B cell (primary cell): ENCODE measurements at regions of chr6 and their contacts with region 1.

Region 1: DNA sequence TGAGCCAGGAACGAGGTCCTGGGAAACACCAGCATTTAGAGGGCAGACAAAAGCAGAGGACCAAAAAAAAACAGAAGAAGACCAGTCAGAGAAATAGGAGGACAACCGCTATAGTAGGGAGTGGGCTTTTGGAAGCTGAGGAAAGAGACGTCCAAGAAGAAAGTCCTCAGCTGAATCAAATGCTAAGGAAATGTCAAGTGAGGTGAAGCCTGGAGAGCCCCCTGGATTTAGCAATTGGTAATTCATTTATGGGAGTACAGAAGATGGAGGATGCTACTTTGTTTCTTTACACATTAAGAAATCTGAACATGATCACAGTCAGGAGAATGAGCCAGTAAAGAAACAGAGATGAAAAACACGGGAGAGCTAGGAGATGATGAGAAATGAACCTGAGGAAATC is 41.1 kb downstream of the LRP11 start:
- DNase-seq: no peak
- ATAC-seq: no peak
- H3K4me3 ChIP-seq: no peak overlapping the region
- H3K4me3 Mint-ChIP-seq: no peak overlapping the region
- H3K27ac ChIP-seq: no peak overlapping the region
- H3K27ac Mint-ChIP-seq: no peak overlapping the region
- H3K4me1 ChIP-seq: no peaks in the 10 kb centered on the region
- H3K4me1 Mint-ChIP-seq: no peaks in the 10 kb centered on the region
- H3K27me3 ChIP-seq: no peaks in the 10 kb centered on the region
- H3K27me3 Mint-ChIP-seq: peaks cover 22% of the 10 kb centered on the region
- CTCF ChIP-seq: no peak

Region 2: GRCh38 chr6:149763866-149764265 is 59.1 kb before region 1 on chr6:
- CTCF ChIA-PET with region 1: no interaction called
- POLR2A ChIA-PET with region 1: no interaction called
- intact Hi-C with region 1: no loop called
- DNase-seq: no peak
- ATAC-seq: no peak
- H3K4me3 ChIP-seq: no peak overlapping the region
- H3K4me3 Mint-ChIP-seq: no peak overlapping the region
- H3K27ac ChIP-seq: no peak overlapping the region
- H3K27ac Mint-ChIP-seq: no peak overlapping the region
- H3K4me1 ChIP-seq: peaks cover 7 to 10% of the 10 kb centered on the region in 2 donors
- H3K4me1 Mint-ChIP-seq: peaks cover 22% of the 10 kb centered on the region
- H3K27me3 ChIP-seq: no peaks in the 10 kb centered on the region
- H3K27me3 Mint-ChIP-seq: no peaks in the 10 kb centered on the region
- CTCF ChIP-seq: no peak

Region 3: DNA sequence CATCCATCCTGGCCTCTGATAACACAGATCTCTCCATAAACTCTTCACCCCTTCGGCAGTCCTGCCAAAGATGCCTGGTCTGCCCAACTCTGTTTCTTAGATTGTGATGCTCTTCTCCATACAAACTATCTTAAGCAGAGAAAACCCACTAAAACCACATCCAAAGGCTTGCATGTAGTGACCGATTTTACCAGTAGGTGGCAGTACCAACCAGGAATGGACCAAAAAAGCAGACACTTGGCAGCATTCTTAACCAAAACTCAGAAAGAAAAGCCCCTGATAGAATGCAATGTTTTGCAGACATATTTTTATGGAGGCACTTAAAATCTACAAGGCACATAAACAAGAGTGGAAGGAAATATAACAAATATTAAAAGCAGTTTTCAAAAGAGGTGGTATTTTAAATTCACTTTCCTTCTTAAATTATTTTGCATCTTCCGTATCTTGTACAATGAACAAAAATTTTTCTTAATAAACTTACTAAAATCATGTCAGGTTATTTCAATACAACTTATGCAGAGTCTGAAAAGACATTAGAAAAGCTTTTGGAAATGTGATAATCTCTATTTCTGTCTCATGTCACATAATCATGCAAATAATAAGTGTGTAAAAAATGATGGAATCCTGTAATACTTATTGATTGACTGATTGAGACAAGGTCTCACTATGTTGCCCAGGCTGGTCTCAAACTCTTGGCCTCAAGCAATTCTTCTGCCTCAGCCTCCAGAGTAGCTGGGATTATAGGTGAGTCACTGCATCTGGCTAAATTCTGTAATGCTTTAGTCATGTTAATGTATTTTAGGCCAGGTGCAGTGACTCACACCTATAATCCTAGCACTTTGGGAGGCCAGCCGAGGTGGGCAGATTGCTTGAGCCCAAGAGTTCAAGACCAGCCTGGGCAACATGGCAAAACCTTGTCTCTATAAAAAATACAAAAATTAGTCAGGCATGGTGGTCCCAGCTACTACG is 11.8 kb after region 1 on chr6:
- CTCF ChIA-PET with region 1: interaction called, 25 read pairs
- POLR2A ChIA-PET with region 1: no interaction called
- intact Hi-C with region 1: no loop called
- DNase-seq: peak; percentile 78
- ATAC-seq: peak; percentile 70
- H3K4me3 ChIP-seq: no peak overlapping the region
- H3K4me3 Mint-ChIP-seq: no peak overlapping the region
- H3K27ac ChIP-seq: no peak overlapping the region
- H3K27ac Mint-ChIP-seq: no peak overlapping the region
- H3K4me1 ChIP-seq: no peaks in the 10 kb centered on the region
- H3K4me1 Mint-ChIP-seq: no peaks in the 10 kb centered on the region
- H3K27me3 ChIP-seq: peaks cover 0 to 8% (median 0%) of the 10 kb centered on the region in 4 experiments
- H3K27me3 Mint-ChIP-seq: peaks cover 21% of the 10 kb centered on the region
- CTCF ChIP-seq: peak; percentile 94